ENCODE measurements at regions of chr1 and their contacts with region 1.

Region 1: GRCh38 chr1:109213785-109214468 is at the start of gene SARS1:
- DNase-seq: peak; percentile 93
- ATAC-seq: peak; percentile 88
- H3K4me3 ChIP-seq: peak within 1 kb of the TSS; percentile 88 to 97 (median 96)
- H3K4me3 Mint-ChIP-seq: peak within 1 kb of the TSS; percentile 100
- H3K27ac ChIP-seq: peak within 1 kb of the TSS; percentile 66 to 73
- H3K27ac Mint-ChIP-seq: peak within 1 kb of the TSS; percentile 98
- H3K4me1 ChIP-seq: peaks cover 22 to 24% of the 10 kb centered on the region in 2 donors
- H3K4me1 Mint-ChIP-seq: peaks cover 35% of the 10 kb centered on the region
- H3K27me3 ChIP-seq: no peaks in the 10 kb centered on the region
- H3K27me3 Mint-ChIP-seq: no peaks in the 10 kb centered on the region
- CTCF ChIP-seq: no peak
- total RNA-seq, gene SARS1: 115 and 119 TPM in 2 replicates

Region 2: GRCh38 chr1:108551137-108551862 is 662.6 kb before region 1 on chr1:
- CTCF ChIA-PET with region 1: no interaction called
- POLR2A ChIA-PET with region 1: no interaction called
- intact Hi-C with region 1: no loop called
- DNase-seq: peak; percentile 20
- ATAC-seq: peak; percentile 31
- H3K4me3 ChIP-seq: no peak overlapping the region
- H3K4me3 Mint-ChIP-seq: no peak overlapping the region
- H3K27ac ChIP-seq: no peak overlapping the region
- H3K27ac Mint-ChIP-seq: no peak overlapping the region
- H3K4me1 ChIP-seq: peaks cover 9 to 10% of the 10 kb centered on the region in 2 donors
- H3K4me1 Mint-ChIP-seq: peaks cover 6% of the 10 kb centered on the region
- H3K27me3 ChIP-seq: no peaks in the 10 kb centered on the region
- H3K27me3 Mint-ChIP-seq: no peaks in the 10 kb centered on the region
- CTCF ChIP-seq: no peak

Region 3: DNA sequence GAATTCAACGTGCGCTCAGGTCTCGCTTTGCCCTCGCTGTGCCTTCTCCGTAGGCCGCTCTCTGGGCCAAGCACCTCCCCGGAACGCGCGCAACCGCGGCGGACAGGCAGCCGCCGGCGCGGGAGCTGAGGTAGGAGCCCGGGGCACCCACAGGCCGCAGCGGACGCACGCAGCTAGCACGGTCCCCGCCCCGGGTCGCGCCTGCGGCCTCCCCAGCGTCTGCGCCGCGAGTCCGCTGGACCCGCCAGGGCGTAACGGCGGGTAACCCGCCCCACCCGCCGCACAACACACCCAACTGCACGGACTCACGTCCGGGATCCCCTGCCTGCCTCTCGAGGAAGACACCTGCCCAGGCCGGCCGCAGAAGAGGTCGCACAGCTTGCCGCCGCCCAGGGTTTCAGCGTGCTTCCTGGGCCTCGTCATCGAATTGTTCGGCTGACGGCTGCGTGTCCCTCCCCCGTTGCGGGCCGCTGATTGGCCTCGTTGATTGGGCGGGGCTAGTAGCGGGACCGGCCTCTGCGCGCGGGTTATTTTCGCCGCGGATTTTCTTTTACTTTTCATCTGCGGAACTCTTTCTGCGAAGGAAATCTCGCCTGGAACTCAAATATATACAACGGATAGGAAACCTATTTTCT is 250.8 kb before region 1 on chr1 and contains the start of gene CLCC1:
- CTCF ChIA-PET with region 1: no interaction called
- POLR2A ChIA-PET with region 1: no interaction called
- intact Hi-C with region 1: loop called (anchors 5 kb)
- DNase-seq: peak; percentile 97
- ATAC-seq: peak; percentile 91
- H3K4me3 ChIP-seq: peak within 1 kb of the TSS; percentile 56 to 94 (median 76)
- H3K4me3 Mint-ChIP-seq: peak within 1 kb of the TSS; percentile 91
- H3K27ac ChIP-seq: peak within 1 kb of the TSS; percentile 86 to 94
- H3K27ac Mint-ChIP-seq: peak within 1 kb of the TSS; percentile 95
- H3K4me1 ChIP-seq: peaks cover 16 to 17% of the 10 kb centered on the region in 2 donors
- H3K4me1 Mint-ChIP-seq: peaks cover 30% of the 10 kb centered on the region
- H3K27me3 ChIP-seq: no peaks in the 10 kb centered on the region
- H3K27me3 Mint-ChIP-seq: no peaks in the 10 kb centered on the region
- CTCF ChIP-seq: no peak
- total RNA-seq, gene CLCC1: 26.9 and 29.5 TPM in 2 replicates

Region 4: DNA sequence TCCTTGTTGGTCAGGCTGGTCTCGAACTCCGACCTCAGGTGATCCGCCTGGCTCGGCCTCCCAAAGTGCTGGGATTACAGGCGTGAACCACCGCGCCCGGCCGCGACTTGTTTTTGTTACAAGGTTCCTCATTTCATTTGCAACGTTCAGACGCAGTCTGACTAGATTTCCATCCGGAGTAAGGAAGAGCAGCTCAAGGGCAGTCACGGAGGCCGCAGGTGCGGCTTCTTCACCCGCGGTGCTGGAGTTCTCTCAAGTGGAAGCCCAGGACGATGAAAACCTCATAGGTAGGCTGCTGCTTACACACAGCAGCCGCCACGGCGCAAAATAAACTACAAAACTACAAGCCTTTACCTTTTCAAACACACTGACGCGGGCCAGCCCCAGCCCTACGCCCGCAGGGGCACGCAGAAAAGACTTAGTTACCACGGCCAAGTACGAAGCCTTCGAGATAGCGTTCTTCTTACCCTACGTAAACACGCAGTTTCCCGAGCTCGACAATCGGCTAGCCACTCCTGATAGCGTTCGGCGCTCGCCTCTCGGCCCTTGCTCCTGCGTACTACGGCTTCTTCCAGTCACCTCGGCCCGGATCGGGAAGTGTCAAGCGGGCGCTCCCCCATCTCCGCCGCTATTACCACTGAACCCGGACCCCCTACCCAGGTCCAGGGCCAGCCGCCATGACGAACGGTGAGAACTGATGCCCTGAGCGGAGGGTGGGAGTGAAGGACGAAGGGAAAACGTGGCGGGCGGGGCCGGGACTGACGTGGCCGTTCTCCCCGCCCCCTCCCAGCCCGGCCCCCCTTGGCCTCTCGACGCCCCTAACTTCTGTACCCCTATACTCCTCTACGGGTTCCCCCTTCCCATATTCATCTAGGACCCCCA is 123.5 kb before region 1 on chr1 and contains the start of gene TMEM167B:
- CTCF ChIA-PET with region 1: no interaction called
- POLR2A ChIA-PET with region 1: no interaction called
- intact Hi-C with region 1: loop called (anchors 1 kb)
- DNase-seq: peak; percentile 93
- ATAC-seq: peak; percentile 89
- H3K4me3 ChIP-seq: peak within 1 kb of the TSS; percentile 88 to 99 (median 93)
- H3K4me3 Mint-ChIP-seq: peak within 1 kb of the TSS; percentile 92
- H3K27ac ChIP-seq: peak within 1 kb of the TSS; percentile 96 to 98
- H3K27ac Mint-ChIP-seq: peak within 1 kb of the TSS; percentile 94
- H3K4me1 ChIP-seq: peaks cover 25 to 28% of the 10 kb centered on the region in 2 donors
- H3K4me1 Mint-ChIP-seq: peaks cover 33% of the 10 kb centered on the region
- H3K27me3 ChIP-seq: no peaks in the 10 kb centered on the region
- H3K27me3 Mint-ChIP-seq: no peaks in the 10 kb centered on the region
- CTCF ChIP-seq: no peak
- total RNA-seq, gene TMEM167B: 40.9 and 44.5 TPM in 2 replicates

Region 5: DNA sequence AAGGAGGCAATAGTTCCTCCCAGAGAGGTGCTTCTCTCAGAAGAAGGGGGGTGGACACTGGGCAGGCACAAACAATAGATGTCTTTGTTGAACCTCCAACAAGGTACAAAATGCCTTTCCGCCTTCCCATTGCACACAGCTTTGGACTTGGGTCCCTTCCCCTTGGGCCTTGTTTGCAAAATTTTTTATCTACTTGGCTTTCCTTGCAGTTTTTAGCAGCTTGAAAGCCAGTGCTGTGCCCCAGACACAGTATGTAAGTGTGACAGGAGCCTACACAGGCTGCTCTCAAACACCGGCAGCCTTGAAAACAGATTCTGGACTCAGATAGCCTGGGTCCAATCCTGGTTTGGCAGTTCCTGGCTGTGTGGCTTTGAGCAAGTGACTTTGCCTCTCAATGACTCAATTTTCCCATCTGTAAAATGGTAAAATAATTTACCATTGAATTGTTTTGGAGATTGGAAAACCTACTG is 57.0 kb before region 1 on chr1:
- CTCF ChIA-PET with region 1: no interaction called
- POLR2A ChIA-PET with region 1: no interaction called
- intact Hi-C with region 1: no loop called
- DNase-seq: no peak
- ATAC-seq: no peak
- H3K4me3 ChIP-seq: no peak overlapping the region
- H3K4me3 Mint-ChIP-seq: no peak overlapping the region
- H3K27ac ChIP-seq: no peak overlapping the region
- H3K27ac Mint-ChIP-seq: no peak overlapping the region
- H3K4me1 ChIP-seq: peaks cover 0 to 7% of the 10 kb centered on the region in 2 donors
- H3K4me1 Mint-ChIP-seq: peaks cover 12% of the 10 kb centered on the region
- H3K27me3 ChIP-seq: peaks cover 0 to 4% (median 0%) of the 10 kb centered on the region in 4 experiments
- H3K27me3 Mint-ChIP-seq: no peaks in the 10 kb centered on the region
- CTCF ChIP-seq: no peak

Region 6: DNA sequence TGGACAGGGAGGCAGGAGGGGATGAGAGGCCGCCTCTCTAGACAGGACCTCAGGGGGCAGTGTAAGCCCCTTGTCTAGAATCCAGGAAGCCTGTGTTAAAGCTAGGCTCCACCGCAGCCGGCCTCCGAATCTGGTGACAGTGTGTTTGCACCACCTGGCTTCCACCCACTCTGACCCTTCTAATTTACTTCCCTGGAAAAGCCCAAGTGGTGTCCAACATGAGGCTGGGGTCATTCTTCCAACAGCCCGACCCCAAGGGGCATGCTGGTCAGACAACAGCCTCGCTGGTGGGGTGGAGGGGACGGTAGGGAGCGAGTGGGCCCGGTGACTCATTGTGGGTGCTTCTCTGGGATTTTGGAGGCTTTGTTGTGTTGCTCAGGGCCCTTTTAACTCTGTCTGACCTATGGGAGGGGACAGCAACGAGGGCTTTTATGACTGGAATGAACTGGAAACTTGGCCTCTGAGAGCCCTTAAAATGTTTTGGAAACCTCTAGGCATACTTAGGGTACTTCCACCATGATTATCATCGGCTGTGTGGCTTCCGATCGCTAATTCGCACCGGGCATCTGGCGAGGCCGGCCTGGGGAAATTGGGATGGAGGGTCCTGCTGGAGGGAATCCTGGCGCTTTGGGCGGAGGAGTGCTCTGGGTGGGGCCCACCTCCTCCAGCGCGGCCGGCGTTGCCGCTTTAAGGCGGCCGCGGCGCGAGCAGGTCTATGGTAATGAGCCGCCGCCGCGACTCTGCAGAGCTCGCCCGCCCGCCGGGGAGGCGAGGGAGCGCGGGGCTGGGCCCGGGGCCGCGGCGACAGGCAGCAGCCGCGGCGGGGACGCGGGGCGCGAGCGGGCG is 35.1 kb after region 1 on chr1 and contains the start of gene CELSR2:
- CTCF ChIA-PET with region 1: no interaction called
- POLR2A ChIA-PET with region 1: no interaction called
- intact Hi-C with region 1: loop called (anchors 1 kb)
- DNase-seq: peak; percentile 70
- ATAC-seq: peak; percentile 88
- H3K4me3 ChIP-seq: peak within 1 kb of the TSS in 3 of 5 experiments; percentile 37 to 54 (median 46)
- H3K4me3 Mint-ChIP-seq: peak within 1 kb of the TSS; percentile 78
- H3K27ac ChIP-seq: no peak within 1 kb of the TSS
- H3K27ac Mint-ChIP-seq: no peak within 1 kb of the TSS
- H3K4me1 ChIP-seq: peaks cover 11 to 22% of the 10 kb centered on the region in 2 donors
- H3K4me1 Mint-ChIP-seq: peaks cover 11% of the 10 kb centered on the region
- H3K27me3 ChIP-seq: peaks cover 0 to 45% (median 14%) of the 10 kb centered on the region in 4 experiments
- H3K27me3 Mint-ChIP-seq: peaks cover 17% of the 10 kb centered on the region
- CTCF ChIP-seq: no peak
- total RNA-seq, gene CELSR2: 2.7 and 2.9 TPM in 2 replicates

Region 7: GRCh38 chr1:109263597-109264398 is 49.9 kb after region 1 on chr1:
- CTCF ChIA-PET with region 1: no interaction called
- POLR2A ChIA-PET with region 1: no interaction called
- intact Hi-C with region 1: no loop called
- DNase-seq: peak; percentile 80
- ATAC-seq: peak; percentile 92
- H3K4me3 ChIP-seq: no peak overlapping the region
- H3K4me3 Mint-ChIP-seq: no peak overlapping the region
- H3K27ac ChIP-seq: no peak overlapping the region
- H3K27ac Mint-ChIP-seq: no peak overlapping the region
- H3K4me1 ChIP-seq: peaks cover 0 to 3% of the 10 kb centered on the region in 2 donors
- H3K4me1 Mint-ChIP-seq: peaks cover 4% of the 10 kb centered on the region
- H3K27me3 ChIP-seq: peaks cover 0 to 4% (median 0%) of the 10 kb centered on the region in 4 experiments
- H3K27me3 Mint-ChIP-seq: peaks cover 4% of the 10 kb centered on the region
- CTCF ChIP-seq: peak; percentile 93

Region 8: DNA sequence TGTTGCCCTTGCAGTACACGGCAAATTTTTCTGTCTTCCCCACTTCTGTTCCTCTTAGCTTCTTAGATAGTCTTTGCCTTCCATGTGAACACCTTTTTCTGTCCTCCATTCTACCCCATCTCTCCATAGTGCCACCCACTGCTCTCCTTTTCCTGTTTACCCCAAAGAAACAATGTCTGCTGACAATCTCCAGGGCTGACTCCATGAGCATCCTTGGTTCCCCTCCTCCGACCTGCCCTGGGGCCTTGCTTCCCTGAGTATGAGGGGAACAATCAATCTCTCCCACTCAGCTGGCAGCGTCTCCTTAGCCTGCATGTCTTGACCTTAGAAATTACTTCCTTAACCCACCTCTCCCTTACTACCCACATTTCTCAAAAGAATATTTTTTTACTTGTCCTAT is 105.2 kb after region 1 on chr1:
- CTCF ChIA-PET with region 1: no interaction called
- POLR2A ChIA-PET with region 1: no interaction called
- intact Hi-C with region 1: no loop called
- DNase-seq: no peak
- ATAC-seq: no peak
- H3K4me3 ChIP-seq: no peak overlapping the region
- H3K4me3 Mint-ChIP-seq: no peak overlapping the region
- H3K27ac ChIP-seq: no peak overlapping the region
- H3K27ac Mint-ChIP-seq: no peak overlapping the region
- H3K4me1 ChIP-seq: no peaks in the 10 kb centered on the region
- H3K4me1 Mint-ChIP-seq: no peaks in the 10 kb centered on the region
- H3K27me3 ChIP-seq: peaks cover 0 to 5% (median 0%) of the 10 kb centered on the region in 4 experiments
- H3K27me3 Mint-ChIP-seq: peaks cover 9% of the 10 kb centered on the region
- CTCF ChIP-seq: no peak